Right ventricle myocardium inferior (tissue), 1 donor: ENCODE measurements at regions of chr5 and their contacts with region 1.

Region 1: GRCh38 chr5:32709781-32710549 is 1.2 kb upstream of the NPR3 start:
- DNase-seq: peak; percentile 78
- ATAC-seq: peak; percentile 68

Region 2: DNA sequence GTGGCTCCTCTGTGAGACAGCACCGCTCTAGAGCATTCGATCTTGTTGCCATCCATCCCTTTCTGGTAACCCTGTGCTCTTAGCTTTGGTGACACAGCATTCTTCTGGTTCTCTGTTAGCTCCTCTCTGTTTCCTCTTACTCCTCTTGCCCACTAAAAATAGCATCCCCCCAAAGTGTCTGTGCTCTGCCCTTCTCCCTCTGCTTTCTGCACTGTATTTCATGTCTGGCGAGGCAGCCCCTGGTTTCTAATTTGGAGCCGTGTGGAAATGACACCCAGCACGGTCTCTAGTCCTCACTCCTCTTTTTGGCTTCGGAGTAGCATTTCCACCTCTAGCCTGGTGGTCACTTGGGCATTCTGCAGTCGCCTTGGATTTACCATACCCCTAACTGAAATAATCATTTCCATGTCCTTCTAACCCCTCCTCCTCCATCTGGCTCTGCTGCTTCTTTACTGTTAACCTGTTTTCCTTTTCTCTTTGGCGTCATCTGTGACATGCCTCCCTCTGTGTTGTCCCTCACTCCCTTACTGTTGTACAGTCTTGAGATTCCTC is 24.9 kb after region 1 on chr5:
- intact Hi-C with region 1: no loop called
- DNase-seq: no peak
- ATAC-seq: no peak

Region 3: DNA sequence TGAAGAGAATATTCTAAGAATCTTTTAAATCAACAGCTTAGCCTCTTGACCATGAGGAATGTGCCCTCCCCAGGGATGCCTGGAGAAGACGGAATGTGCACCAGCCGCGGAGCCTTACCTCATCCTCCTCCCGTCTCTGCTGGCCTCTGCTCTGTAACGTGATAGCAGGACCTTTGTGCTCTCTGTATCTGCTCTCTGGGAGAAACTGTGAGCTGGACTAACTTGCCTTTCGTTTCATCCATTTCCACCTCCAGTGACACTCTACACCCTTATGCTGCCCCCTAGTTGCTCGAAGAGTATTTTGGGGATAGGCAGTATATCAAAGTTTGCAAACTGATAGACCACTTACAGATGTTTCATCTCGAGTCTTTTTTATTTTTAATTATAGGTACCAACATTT is 142.6 kb after region 1 on chr5:
- intact Hi-C with region 1: loop called (anchors 5 kb)
- DNase-seq: no peak
- ATAC-seq: peak; percentile 72

Region 4: DNA sequence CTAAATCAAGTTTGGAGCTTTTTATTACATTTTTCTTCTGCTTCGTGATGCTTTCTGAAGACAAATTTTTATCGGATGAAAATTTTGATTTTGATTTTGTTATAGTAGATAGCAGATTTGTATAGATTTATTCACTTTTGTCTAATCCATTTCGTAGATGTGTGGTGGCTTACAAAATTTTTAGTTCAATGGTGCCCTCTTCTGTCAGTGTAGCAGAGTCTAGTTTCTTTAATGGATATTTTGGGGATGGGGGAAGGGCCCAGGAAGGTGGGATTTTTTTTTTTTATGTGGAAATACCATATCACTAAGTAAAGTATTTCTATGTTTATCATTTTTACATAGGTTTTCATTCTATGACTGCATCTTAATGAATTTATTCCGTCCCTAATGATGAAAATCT is 470.9 kb after region 1 on chr5:
- intact Hi-C with region 1: loop called (anchors 2 kb)
- DNase-seq: no peak
- ATAC-seq: no peak

Region 5: DNA sequence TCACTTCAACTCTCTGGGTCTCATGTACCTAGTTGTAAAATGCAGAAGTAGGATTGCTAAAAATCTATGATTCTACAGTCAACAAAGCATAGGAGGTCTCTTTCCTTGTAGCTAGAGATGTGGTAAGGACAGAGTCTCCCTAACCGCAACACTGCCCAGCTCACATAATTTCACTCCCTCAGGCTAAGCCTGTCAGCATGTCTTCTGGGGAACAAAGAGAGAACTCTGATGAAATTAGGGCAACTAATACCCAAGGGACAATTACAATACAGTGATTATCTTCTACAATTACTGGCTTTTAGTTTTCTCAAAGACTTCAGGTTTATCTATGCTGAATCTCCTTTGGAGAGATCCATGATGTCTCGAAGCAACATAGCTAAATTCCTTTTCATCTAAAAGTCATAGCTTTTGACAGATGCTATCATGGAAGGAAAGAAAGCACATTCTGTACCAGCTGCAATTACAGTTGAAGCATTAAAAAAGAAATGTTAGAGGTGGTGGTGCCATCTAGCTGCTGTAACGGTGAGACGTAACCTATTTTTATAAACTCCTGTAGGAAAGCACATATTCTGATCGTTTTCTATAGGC is 589.8 kb after region 1 on chr5:
- intact Hi-C with region 1: loop called (anchors 5 kb)
- DNase-seq: no peak
- ATAC-seq: peak; percentile 86

Region 6: DNA sequence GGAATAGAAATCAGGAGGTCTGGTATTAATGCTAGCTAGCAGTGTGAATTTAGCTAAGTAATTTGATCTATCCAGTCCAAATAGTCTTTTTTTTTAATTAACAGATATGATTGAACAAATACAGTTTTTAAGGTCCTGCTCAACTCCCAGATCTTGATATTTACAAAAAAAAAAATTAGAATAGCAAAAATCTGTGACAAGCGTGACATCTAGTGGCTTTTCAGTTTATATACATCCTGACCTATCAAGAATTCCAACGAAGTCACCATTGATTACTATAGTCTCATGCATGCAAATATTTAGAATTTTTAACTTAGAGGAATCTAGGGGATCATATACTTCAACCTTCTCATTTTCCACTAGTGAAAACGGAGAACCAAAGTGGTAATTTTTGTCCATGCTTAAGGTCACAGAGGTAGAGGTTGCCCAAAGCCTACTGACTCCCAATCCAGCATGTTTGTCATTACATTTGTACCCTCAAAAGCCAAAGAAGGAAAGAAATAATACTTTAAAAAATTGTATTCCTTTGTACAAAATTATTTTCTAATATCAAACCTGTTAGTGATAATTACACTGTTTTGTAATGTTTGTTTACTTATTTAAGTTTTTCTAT is 713.2 kb after region 1 on chr5:
- intact Hi-C with region 1: loop called (anchors 5 kb)
- DNase-seq: no peak
- ATAC-seq: no peak